B cell (primary cell): ENCODE measurements at regions of chr11 and their contacts with region 1.

Region 1: GRCh38 chr11:87331273-87331672 is 293.5 kb downstream of the TMEM135 start:
- DNase-seq: no peak
- ATAC-seq: no peak
- H3K4me3 ChIP-seq: no peak overlapping the region
- H3K4me3 Mint-ChIP-seq: no peak overlapping the region
- H3K27ac ChIP-seq: no peak overlapping the region
- H3K27ac Mint-ChIP-seq: no peak overlapping the region
- H3K4me1 ChIP-seq: no peaks in the 10 kb centered on the region
- H3K4me1 Mint-ChIP-seq: no peaks in the 10 kb centered on the region
- H3K27me3 ChIP-seq: no peaks in the 10 kb centered on the region
- H3K27me3 Mint-ChIP-seq: no peaks in the 10 kb centered on the region
- CTCF ChIP-seq: no peak

Region 2: GRCh38 chr11:87281496-87281895 is 49.8 kb before region 1 on chr11:
- CTCF ChIA-PET with region 1: no interaction called
- POLR2A ChIA-PET with region 1: no interaction called
- intact Hi-C with region 1: no loop called
- DNase-seq: no peak
- ATAC-seq: no peak
- H3K4me3 ChIP-seq: no peak overlapping the region
- H3K4me3 Mint-ChIP-seq: no peak overlapping the region
- H3K27ac ChIP-seq: no peak overlapping the region
- H3K27ac Mint-ChIP-seq: no peak overlapping the region
- H3K4me1 ChIP-seq: no peaks in the 10 kb centered on the region
- H3K4me1 Mint-ChIP-seq: no peaks in the 10 kb centered on the region
- H3K27me3 ChIP-seq: no peaks in the 10 kb centered on the region
- H3K27me3 Mint-ChIP-seq: no peaks in the 10 kb centered on the region
- CTCF ChIP-seq: no peak

Region 3: GRCh38 chr11:87352759-87353707 is 21.8 kb after region 1 on chr11:
- CTCF ChIA-PET with region 1: interaction called, 11 read pairs
- POLR2A ChIA-PET with region 1: no interaction called
- intact Hi-C with region 1: no loop called
- DNase-seq: peak; percentile 76
- ATAC-seq: peak; percentile 88
- H3K4me3 ChIP-seq: no peak overlapping the region
- H3K4me3 Mint-ChIP-seq: no peak overlapping the region
- H3K27ac ChIP-seq: no peak overlapping the region
- H3K27ac Mint-ChIP-seq: no peak overlapping the region
- H3K4me1 ChIP-seq: peaks cover 7% of the 10 kb centered on the region in 2 donors
- H3K4me1 Mint-ChIP-seq: peaks cover 14% of the 10 kb centered on the region
- H3K27me3 ChIP-seq: peaks cover 0 to 4% (median 1%) of the 10 kb centered on the region in 4 experiments
- H3K27me3 Mint-ChIP-seq: peaks cover 10% of the 10 kb centered on the region
- CTCF ChIP-seq: peak; percentile 97